ENCODE measurements at regions of chr3 and their contacts with region 1.

Region 1: GRCh38 chr3:196486263-196486662 is 17.3 kb downstream of the RNF168 start:
- DNase-seq: no peak
- H3K4me3 ChIP-seq: no peak overlapping the region
- H3K27ac ChIP-seq: no peak overlapping the region
- H3K4me1 ChIP-seq: 0 out of 2 replicates have a peak, but pooled peaks cover 6% of the 10 kb centered on the region
- H3K27me3 ChIP-seq: no peaks in the 10 kb centered on the region
- CTCF ChIP-seq: peak; percentile 57; the same call in 1 of the 2 replicates

Region 2: GRCh38 chr3:196219194-196219978 is 266.9 kb before region 1 on chr3:
- CTCF ChIA-PET with region 1: no interaction called
- POLR2A ChIA-PET with region 1: interaction called, 16 read pairs
- intact Hi-C with region 1: no loop called
- DNase-seq: peak in 1 of 2 experiments; percentile 76
- H3K4me3 ChIP-seq: no peak overlapping the region
- H3K27ac ChIP-seq: no peak overlapping the region
- H3K4me1 ChIP-seq: peaks cover 12% of the 10 kb centered on the region
- H3K27me3 ChIP-seq: no peaks in the 10 kb centered on the region
- CTCF ChIP-seq: no peak

Region 3: DNA sequence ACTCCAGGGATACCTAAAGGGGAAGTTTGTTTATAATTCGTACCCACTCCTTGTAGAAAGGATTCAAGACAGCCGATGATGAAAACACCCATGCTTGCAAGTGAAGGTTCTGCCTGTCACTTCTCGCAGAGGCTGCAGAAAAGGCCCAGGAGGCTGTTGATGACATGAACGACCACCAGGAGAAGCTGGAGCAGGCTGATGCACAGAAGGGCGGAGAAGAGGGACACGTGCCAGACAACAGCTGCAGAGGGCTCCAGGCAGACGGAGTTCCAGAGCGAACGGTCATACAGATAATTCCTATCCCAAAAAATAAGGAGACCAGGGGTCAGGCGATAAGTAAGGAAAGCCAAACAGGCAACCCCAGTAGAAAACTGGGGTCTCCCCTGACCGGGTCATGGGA is 162.6 kb before region 1 on chr3:
- CTCF ChIA-PET with region 1: no interaction called
- POLR2A ChIA-PET with region 1: interaction called, 12 read pairs
- intact Hi-C with region 1: no loop called
- DNase-seq: no peak
- H3K4me3 ChIP-seq: no peak overlapping the region
- H3K27ac ChIP-seq: no peak overlapping the region
- H3K4me1 ChIP-seq: no peaks in the 10 kb centered on the region
- H3K27me3 ChIP-seq: no peaks in the 10 kb centered on the region
- CTCF ChIP-seq: no peak; the same call in 1 of the 2 replicates

Region 4: DNA sequence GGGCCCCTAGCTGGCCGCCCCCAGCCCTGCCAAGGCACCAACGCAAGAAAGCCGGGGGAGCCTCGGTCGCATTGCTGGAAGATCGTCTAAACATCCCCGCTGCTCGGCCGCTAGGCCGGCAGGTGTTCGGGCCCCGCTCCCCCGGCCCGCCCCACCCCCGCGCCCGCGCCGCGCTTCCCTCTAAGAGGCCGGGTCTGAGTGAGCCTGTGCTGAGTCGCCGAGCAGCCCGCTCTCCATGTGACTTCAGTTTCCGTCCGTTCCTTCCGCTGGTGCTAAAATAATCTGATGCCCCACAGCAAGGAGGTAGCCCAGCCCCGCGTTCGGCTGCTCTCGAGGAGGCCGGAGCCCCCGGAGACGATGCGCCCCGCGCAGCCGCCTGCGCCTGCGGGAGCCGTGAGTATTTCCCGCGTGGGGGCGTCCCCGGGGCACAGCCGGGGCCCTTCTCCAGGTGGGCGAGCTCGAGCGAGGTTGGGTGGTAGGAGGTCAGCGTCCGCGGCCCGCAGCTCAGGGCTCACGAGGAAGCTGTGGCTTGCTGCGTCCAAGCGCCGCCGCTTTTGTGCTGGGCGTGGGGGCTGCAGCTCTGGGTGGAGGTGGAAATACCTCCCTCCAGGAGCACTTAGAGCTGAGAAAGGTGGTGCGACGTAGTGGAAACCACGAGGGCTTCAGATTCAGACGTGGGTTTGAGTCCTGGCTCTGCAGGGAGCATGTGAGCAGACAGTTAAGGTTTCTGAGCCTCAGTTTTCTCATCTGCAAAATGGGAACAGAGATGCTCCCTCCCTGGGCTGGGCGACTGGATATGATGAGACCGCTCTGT is 153.4 kb after region 1 on chr3 and contains the start of gene NRROS:
- CTCF ChIA-PET with region 1: no interaction called
- POLR2A ChIA-PET with region 1: no interaction called
- intact Hi-C with region 1: no loop called
- DNase-seq: peak; percentile 43 to 60
- H3K4me3 ChIP-seq: peak within 1 kb of the TSS; percentile 66
- H3K27ac ChIP-seq: no peak within 1 kb of the TSS
- H3K4me1 ChIP-seq: no peaks in the 10 kb centered on the region; the same call in 1 of the 2 replicates
- H3K27me3 ChIP-seq: peaks cover 20% of the 10 kb centered on the region
- CTCF ChIP-seq: no peak
- total RNA-seq, gene NRROS: 2.2 and 3.1 TPM in 2 replicates

Region 5: DNA sequence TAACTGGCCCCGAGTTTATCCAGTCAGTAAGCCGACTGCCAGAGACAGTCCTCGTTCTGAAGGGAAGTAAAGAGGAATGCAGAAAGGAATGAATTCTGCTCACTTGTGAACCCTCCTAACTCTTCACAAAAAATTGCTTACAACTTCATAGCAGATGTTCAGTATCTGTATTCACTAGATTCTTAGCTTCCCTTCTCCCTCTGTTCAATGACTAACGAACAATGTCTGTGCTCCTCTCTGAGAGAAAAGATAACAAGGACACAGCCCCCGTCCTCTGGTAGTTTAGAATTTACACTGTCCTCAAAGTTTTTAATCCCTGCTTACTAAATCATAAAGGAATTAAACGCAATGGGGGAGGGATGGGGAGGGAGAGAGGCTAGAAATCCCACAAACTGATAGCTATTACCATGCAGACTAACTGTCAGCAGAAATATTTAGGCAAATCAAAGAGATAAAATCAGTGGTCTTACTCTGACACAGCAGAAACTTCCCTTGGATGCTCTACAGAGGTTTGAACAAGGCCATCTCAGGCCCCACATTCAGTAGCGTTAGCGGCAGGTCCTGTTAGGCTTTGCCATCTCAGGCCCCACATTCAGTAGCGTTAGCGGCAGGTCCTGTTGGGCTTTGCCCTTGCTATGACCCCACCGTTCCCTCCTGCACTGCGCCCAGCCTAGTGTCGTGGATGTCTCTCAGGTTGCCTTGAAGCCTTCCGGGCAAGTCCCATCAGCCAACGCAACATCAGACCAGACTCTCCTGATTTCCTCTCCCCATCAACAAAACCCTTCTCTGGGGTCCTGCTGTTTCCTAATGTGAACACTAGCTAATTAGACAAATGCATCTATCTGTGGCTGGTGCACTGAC is 176.7 kb after region 1 on chr3:
- CTCF ChIA-PET with region 1: interaction called, 13 read pairs
- POLR2A ChIA-PET with region 1: no interaction called
- intact Hi-C with region 1: no loop called
- DNase-seq: no peak
- H3K4me3 ChIP-seq: no peak overlapping the region
- H3K27ac ChIP-seq: no peak overlapping the region
- H3K4me1 ChIP-seq: 0 out of 2 replicates have a peak, but pooled peaks cover 16% of the 10 kb centered on the region
- H3K27me3 ChIP-seq: no peaks in the 10 kb centered on the region
- CTCF ChIP-seq: no peak